Spleen (tissue), 13 donors: ENCODE measurements at regions of chr3 and their contacts with region 1.

Region 1: GRCh38 chr3:124032648-124033359 is 40.9 kb upstream of the ROPN1 start:
- DNase-seq: peak; percentile 91
- H3K4me3 ChIP-seq: peak overlapping the region; percentile 49 to 79 (median 58)
- H3K27ac ChIP-seq: peak overlapping the region; percentile 60 to 90 (median 86)
- H3K4me1 ChIP-seq: peaks cover 0 to 37% (median 13%) of the 10 kb centered on the region in 6 donors
- H3K27me3 ChIP-seq: peaks cover 4 to 90% (median 23%) of the 10 kb centered on the region in 7 donors
- CTCF ChIP-seq: peak in 10 of 11 experiments; percentile 7 to 87 (median 73)
- POLR2A ChIP-seq: no peak

Region 2: GRCh38 chr3:124246949-124247348 is 214.1 kb after region 1 on chr3:
- intact Hi-C with region 1: loop called (anchors 10 kb)
- DNase-seq: no peak
- H3K4me3 ChIP-seq: no peak overlapping the region
- H3K27ac ChIP-seq: peak overlapping the region in 3 of 8 donors; percentile 86 to 91 (median 89)
- H3K4me1 ChIP-seq: peaks cover 0 to 50% (median 18%) of the 10 kb centered on the region in 6 donors
- H3K27me3 ChIP-seq: peaks cover 0 to 6% (median 0%) of the 10 kb centered on the region in 7 donors
- CTCF ChIP-seq: peak in 1 of 11 experiments; percentile 30
- POLR2A ChIP-seq: no peak